Ovary (tissue), 10 donors: ENCODE measurements at regions of chr22 and their contacts with region 1.

Region 1: DNA sequence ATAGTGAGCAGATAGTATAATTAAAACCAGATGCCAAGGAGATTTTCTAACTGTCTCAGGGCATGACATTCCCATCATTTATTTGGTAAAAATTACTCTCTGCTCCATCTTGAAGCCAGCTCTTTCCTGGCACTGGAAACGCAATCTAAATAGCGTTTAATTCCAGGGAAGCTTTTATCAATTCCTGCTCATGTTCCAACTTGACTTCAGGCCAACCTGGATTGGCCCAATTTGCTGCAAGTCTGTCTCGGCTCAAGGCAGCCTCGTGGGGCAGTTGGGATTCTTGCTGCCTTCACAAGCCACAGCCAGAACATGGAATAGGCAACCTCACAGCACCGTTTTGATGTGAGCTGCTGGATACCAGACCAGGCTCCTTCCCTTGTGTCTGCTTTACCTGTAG is 1255.9 kb downstream of the TBC1D22A start:
- DNase-seq: no peak
- H3K4me3 ChIP-seq: no peak overlapping the region
- H3K27ac ChIP-seq: no peak overlapping the region
- H3K4me1 ChIP-seq: no peaks in the 10 kb centered on the region
- H3K27me3 ChIP-seq: no peaks in the 10 kb centered on the region
- CTCF ChIP-seq: no peak
- EP300 ChIP-seq: no peak
- POLR2A ChIP-seq: no peak

Region 2: GRCh38 chr22:48076026-48076425 is 57.7 kb after region 1 on chr22:
- intact Hi-C with region 1: loop called in 1 of 4 experiments (anchors 10 kb)
- DNase-seq: no peak
- H3K4me3 ChIP-seq: no peak overlapping the region
- H3K27ac ChIP-seq: no peak overlapping the region
- H3K4me1 ChIP-seq: no peaks in the 10 kb centered on the region
- H3K27me3 ChIP-seq: no peaks in the 10 kb centered on the region
- CTCF ChIP-seq: no peak
- EP300 ChIP-seq: no peak
- POLR2A ChIP-seq: no peak